ENCODE measurements at regions of chr4 and their contacts with region 1.

Region 1: DNA sequence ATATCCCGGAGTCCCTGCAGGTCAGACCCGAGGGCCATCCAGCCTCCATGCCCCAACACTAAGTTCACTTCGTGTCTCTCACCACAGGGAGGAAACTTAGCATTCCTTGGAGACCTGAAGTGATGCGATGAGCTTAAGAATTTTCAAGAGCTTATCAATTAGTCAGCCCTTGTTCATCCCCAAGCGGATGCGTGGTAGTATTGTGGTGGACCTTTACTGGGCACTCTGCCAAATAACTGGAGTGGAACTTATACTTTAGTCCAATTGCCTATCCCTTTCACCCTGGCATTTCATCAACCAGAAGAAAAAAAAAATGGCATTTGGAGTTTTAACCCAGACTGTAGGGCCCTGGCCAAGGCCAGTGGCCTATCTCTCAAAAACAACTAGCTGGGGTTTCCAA is 137.1 kb downstream of the RELL1 start:
- DNase-seq: peak; percentile 50
- H3K4me3 ChIP-seq: no peak overlapping the region
- H3K27ac ChIP-seq: peak overlapping the region; percentile 62
- H3K4me1 ChIP-seq: peaks cover 9% of the 10 kb centered on the region
- H3K27me3 ChIP-seq: no peaks in the 10 kb centered on the region
- CTCF ChIP-seq: no peak
- POLR2A ChIP-seq: no peak

Region 2: DNA sequence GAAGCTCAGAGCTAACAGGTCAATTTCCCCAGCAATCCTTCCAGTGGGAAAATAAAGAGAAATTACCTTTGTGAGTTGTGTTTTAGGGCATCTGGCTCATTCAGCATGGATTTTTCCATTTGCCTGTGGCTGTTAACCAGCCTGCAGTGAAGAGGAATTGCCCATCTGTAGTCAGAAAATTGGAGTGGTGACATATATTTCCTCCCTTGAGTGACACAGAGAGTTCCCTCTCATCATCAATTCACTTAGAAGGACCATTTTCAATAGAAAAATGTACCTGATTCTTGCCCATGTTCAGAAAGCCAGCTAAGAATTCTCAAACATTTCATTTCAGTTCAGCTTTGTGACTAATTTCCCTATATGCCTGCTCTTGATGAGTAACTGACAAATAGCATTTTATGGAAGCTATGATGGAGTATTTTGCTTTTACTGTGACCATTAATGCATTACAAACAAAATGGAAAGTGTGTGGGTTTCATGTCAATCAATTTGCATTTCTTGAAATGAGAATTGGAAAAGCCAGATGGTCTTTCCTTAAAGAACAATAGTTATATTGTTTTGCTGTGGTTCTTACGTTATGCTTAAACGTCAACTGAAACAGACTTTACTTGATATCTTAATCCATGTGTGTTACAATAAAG is 148.7 kb before region 1 on chr4:
- CTCF ChIA-PET with region 1: no interaction called
- POLR2A ChIA-PET with region 1: no interaction called
- dilution Hi-C with region 1: no loop called
- intact Hi-C with region 1: no loop called
- DNase-seq: no peak
- H3K4me3 ChIP-seq: no peak overlapping the region
- H3K27ac ChIP-seq: no peak overlapping the region
- H3K4me1 ChIP-seq: no peaks in the 10 kb centered on the region
- H3K27me3 ChIP-seq: no peaks in the 10 kb centered on the region
- CTCF ChIP-seq: no peak
- POLR2A ChIP-seq: no peak

Region 3: DNA sequence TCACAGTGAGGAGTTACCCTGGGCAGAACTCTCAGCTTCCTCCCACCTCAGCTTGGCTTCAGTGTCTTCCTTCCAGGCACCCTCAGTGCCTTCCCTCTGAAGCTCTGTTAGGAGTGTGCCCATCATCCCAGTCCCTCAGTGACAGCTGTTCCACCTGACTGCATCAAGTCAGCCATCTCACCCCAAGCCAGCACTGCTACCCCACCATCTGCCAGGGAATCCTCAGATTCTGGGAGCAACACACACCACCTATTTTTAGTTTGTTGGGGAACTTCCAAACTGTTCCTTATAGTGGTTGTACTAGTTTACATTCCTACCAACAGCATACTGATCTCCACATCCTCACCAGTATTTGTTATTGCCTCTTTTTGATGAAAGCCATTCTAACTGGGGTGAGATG is 45.8 kb before region 1 on chr4:
- CTCF ChIA-PET with region 1: no interaction called
- POLR2A ChIA-PET with region 1: no interaction called
- dilution Hi-C with region 1: no loop called
- intact Hi-C with region 1: no loop called
- DNase-seq: no peak
- H3K4me3 ChIP-seq: no peak overlapping the region
- H3K27ac ChIP-seq: no peak overlapping the region
- H3K4me1 ChIP-seq: no peaks in the 10 kb centered on the region
- H3K27me3 ChIP-seq: no peaks in the 10 kb centered on the region
- CTCF ChIP-seq: no peak
- POLR2A ChIP-seq: no peak

Region 4: DNA sequence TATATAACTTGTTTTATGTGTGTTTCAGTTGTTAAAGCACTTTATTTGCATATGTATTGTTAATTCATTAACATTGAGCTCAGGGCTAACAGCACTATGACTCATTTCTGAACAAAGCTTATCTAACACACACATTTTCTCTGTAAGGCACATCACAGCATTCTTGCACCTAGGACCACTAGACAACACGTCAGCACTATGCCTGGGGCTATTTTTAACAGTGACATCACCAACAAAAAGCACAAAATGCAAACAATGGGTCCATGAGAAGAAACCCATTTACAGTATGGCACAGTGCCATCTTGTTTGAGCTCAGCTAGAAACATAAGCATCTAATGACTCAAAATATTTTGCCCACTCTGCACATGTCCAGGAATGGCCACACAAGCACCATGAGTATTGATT is 12.8 kb after region 1 on chr4:
- CTCF ChIA-PET with region 1: interaction called, 14 read pairs
- POLR2A ChIA-PET with region 1: no interaction called
- dilution Hi-C with region 1: no loop called
- intact Hi-C with region 1: loop called (anchors 1 kb)
- DNase-seq: peak; percentile 42
- H3K4me3 ChIP-seq: no peak overlapping the region
- H3K27ac ChIP-seq: no peak overlapping the region
- H3K4me1 ChIP-seq: peaks cover 6% of the 10 kb centered on the region
- H3K27me3 ChIP-seq: no peaks in the 10 kb centered on the region
- CTCF ChIP-seq: no peak
- POLR2A ChIP-seq: no peak

Region 5: GRCh38 chr4:37568481-37568880 is 19.4 kb after region 1 on chr4:
- CTCF ChIA-PET with region 1: interaction called, 14 read pairs
- POLR2A ChIA-PET with region 1: no interaction called
- dilution Hi-C with region 1: no loop called
- intact Hi-C with region 1: loop called (anchors 2 kb)
- DNase-seq: no peak
- H3K4me3 ChIP-seq: no peak overlapping the region
- H3K27ac ChIP-seq: no peak overlapping the region
- H3K4me1 ChIP-seq: no peaks in the 10 kb centered on the region
- H3K27me3 ChIP-seq: no peaks in the 10 kb centered on the region
- CTCF ChIP-seq: no peak
- POLR2A ChIP-seq: no peak

Measured in endothelial cell of umbilical vein (primary cell).